CD8-positive, alpha-beta memory T cell (primary cell): ENCODE measurements at regions of chr3 and their contacts with region 1.

Region 1: DNA sequence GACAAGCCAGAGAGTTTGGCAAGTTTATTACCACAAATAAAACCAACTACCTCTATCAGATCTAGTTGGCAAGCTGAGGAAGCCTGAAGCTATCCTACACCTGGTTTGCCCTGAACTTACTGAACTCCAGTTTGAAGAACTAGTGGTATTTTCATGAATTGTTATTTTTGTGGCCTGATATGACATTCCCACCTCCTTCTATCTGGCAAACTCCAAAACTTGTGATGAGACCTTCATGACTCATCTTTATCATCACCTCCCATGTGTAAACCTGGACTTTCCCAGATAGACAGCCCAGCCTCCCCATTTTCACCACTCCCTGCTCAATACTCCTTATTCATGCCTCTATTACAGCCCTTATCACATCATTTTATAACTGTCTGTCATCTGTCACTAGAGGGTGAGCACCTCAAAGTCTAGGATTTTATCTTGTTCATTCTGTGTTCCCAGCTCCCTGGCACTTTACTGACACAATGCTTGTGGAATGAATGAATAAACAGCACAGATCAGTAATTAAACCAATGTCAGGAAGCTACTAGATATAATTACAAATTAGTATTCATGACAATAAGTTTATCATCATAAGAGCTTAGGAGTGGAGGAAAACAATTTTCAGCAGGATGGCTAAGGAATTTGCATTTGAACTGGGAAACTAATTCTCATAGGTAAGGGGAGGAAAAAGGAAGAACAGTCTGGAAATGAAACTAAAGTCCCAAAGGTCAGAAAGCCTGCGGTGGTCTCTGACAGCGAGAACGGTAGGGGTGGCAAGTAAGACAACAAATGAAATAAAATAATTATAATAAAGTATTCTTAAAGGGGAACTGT is 13.2 kb upstream of the TRANK1 start:
- DNase-seq: no peak
- H3K4me3 ChIP-seq: no peak overlapping the region
- H3K4me3 Mint-ChIP-seq: peak overlapping the region in 3 of 7 donors; percentile 23 to 70 (median 35)
- H3K27ac ChIP-seq: peak overlapping the region; percentile 68
- H3K27ac Mint-ChIP-seq: peak overlapping the region; percentile 26 to 75 (median 55)
- H3K4me1 ChIP-seq: no peaks in the 10 kb centered on the region
- H3K4me1 Mint-ChIP-seq: peaks cover 8 to 16% (median 11%) of the 10 kb centered on the region in 3 donors
- H3K27me3 ChIP-seq: no peaks in the 10 kb centered on the region
- H3K27me3 Mint-ChIP-seq: no peaks in the 10 kb centered on the region

Region 2: GRCh38 chr3:36312351-36312750 is 645.7 kb before region 1 on chr3:
- CTCF ChIA-PET with region 1: no interaction called
- POLR2A ChIA-PET with region 1: no interaction called
- DNase-seq: no peak
- H3K4me3 ChIP-seq: no peak overlapping the region
- H3K4me3 Mint-ChIP-seq: no peak overlapping the region
- H3K27ac ChIP-seq: no peak overlapping the region
- H3K27ac Mint-ChIP-seq: no peak overlapping the region
- H3K4me1 ChIP-seq: no peaks in the 10 kb centered on the region
- H3K4me1 Mint-ChIP-seq: no peaks in the 10 kb centered on the region
- H3K27me3 ChIP-seq: no peaks in the 10 kb centered on the region
- H3K27me3 Mint-ChIP-seq: no peaks in the 10 kb centered on the region

Region 3: GRCh38 chr3:36876181-36876936 is 81.7 kb before region 1 on chr3:
- CTCF ChIA-PET with region 1: interaction called, 10 read pairs
- POLR2A ChIA-PET with region 1: interaction called, 5 read pairs
- DNase-seq: peak in 4 of 5 donors; percentile 23 to 77 (median 58)
- H3K4me3 ChIP-seq: peak overlapping the region; percentile 49
- H3K4me3 Mint-ChIP-seq: peak overlapping the region; percentile 28 to 80 (median 74)
- H3K27ac ChIP-seq: peak overlapping the region; percentile 54
- H3K27ac Mint-ChIP-seq: peak overlapping the region; percentile 90 to 99 (median 94)
- H3K4me1 ChIP-seq: peaks cover 43% of the 10 kb centered on the region
- H3K4me1 Mint-ChIP-seq: peaks cover 58 to 83% (median 77%) of the 10 kb centered on the region in 3 donors
- H3K27me3 ChIP-seq: no peaks in the 10 kb centered on the region
- H3K27me3 Mint-ChIP-seq: no peaks in the 10 kb centered on the region

Region 4: GRCh38 chr3:36904641-36905040 is 53.4 kb before region 1 on chr3:
- CTCF ChIA-PET with region 1: interaction called, 22 read pairs
- POLR2A ChIA-PET with region 1: interaction called, 3 read pairs
- DNase-seq: no peak
- H3K4me3 ChIP-seq: no peak overlapping the region
- H3K4me3 Mint-ChIP-seq: peak overlapping the region; percentile 27 to 93 (median 60)
- H3K27ac ChIP-seq: no peak overlapping the region
- H3K27ac Mint-ChIP-seq: peak overlapping the region; percentile 61 to 91 (median 78)
- H3K4me1 ChIP-seq: peaks cover 77% of the 10 kb centered on the region
- H3K4me1 Mint-ChIP-seq: peaks cover 78 to 91% (median 91%) of the 10 kb centered on the region in 3 donors
- H3K27me3 ChIP-seq: no peaks in the 10 kb centered on the region
- H3K27me3 Mint-ChIP-seq: peaks cover 0 to 2% of the 10 kb centered on the region in 2 donors

Region 5: GRCh38 chr3:36923523-36923943 is 34.5 kb before region 1 on chr3:
- CTCF ChIA-PET with region 1: interaction called, 18 read pairs
- POLR2A ChIA-PET with region 1: no interaction called
- DNase-seq: peak in 1 of 5 donors; percentile 12
- H3K4me3 ChIP-seq: no peak overlapping the region
- H3K4me3 Mint-ChIP-seq: peak overlapping the region in 1 of 7 donors; percentile 13
- H3K27ac ChIP-seq: peak overlapping the region; percentile 86
- H3K27ac Mint-ChIP-seq: peak overlapping the region in 2 of 8 donors; percentile 36 to 73
- H3K4me1 ChIP-seq: no peaks in the 10 kb centered on the region
- H3K4me1 Mint-ChIP-seq: peaks cover 4 to 20% (median 19%) of the 10 kb centered on the region in 3 donors
- H3K27me3 ChIP-seq: no peaks in the 10 kb centered on the region
- H3K27me3 Mint-ChIP-seq: peaks cover 0 to 2% of the 10 kb centered on the region in 2 donors

Region 6: DNA sequence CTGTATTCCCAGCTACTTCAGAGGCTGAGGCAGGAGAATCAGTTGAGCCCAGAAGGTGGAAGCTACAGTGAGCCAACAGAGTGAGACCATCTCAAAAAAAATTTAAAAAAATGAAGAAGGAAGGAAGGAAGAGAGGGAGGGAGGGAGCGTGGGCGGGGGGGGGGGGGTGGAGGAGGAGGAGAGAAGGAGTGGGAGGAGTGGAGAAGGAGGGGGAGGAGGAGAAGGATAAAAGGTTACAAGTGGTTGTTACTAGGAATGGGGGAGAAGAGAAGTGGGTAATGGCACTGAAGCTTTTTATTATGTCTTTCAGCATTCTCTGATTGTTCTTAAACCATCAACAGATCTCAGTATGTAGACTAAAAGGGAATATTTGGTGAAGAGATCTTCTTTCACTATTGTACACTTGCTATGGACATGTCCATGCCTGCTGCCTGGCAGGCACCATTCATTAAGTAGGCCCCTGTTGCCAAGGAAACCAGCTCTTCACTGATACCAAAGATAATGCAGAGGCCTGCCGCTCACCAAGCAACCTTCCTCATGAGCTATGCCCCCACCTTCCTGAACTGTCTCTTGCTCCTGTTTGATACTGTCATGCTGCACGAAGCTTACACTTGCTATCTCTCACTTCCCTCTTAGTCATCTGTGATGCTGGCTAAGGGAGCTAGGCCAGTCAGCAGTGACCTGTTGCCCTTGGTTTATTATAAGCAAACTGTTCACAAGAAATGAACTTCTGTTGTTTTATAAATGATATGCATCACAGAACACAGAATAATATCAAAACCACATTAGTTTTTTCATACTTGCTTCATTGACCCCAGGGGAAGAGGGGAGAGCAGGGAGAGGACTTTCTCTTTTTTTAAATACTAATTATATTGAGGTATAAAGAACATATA is 11.7 kb after region 1 on chr3:
- CTCF ChIA-PET with region 1: interaction called, 11 read pairs
- POLR2A ChIA-PET with region 1: interaction called, 4 read pairs
- DNase-seq: peak in 3 of 5 donors; percentile 16 to 55 (median 33)
- H3K4me3 ChIP-seq: no peak overlapping the region
- H3K4me3 Mint-ChIP-seq: no peak overlapping the region
- H3K27ac ChIP-seq: peak overlapping the region; percentile 62
- H3K27ac Mint-ChIP-seq: peak overlapping the region; percentile 29 to 93 (median 54)
- H3K4me1 ChIP-seq: peaks cover 6% of the 10 kb centered on the region
- H3K4me1 Mint-ChIP-seq: peaks cover 14 to 24% (median 22%) of the 10 kb centered on the region in 3 donors
- H3K27me3 ChIP-seq: no peaks in the 10 kb centered on the region
- H3K27me3 Mint-ChIP-seq: no peaks in the 10 kb centered on the region

Region 7: DNA sequence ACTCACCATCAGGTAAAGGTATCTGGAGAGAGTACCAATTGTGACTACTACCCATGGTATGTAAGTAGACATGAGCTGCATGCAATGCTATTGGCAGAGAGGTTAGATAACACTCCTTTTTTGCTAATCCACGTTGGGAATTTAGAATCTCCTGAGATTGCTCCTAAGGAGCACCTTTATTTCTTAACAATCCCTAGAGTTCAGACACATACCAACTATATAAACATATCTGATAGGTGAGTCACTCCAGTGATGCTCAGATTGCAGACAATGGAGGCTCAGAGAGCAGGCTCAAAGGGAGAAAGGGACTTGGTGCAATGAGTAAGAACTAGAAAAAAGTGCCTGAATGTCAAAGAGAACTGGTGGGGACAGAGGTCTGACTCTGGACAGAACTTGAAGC is 263.3 kb after region 1 on chr3:
- CTCF ChIA-PET with region 1: interaction called, 3 read pairs
- POLR2A ChIA-PET with region 1: interaction called, 10 read pairs
- DNase-seq: no peak
- H3K4me3 ChIP-seq: no peak overlapping the region
- H3K4me3 Mint-ChIP-seq: no peak overlapping the region
- H3K27ac ChIP-seq: no peak overlapping the region
- H3K27ac Mint-ChIP-seq: peak overlapping the region in 3 of 8 donors; percentile 30 to 93 (median 38)
- H3K4me1 ChIP-seq: peaks cover 56% of the 10 kb centered on the region
- H3K4me1 Mint-ChIP-seq: peaks cover 58 to 73% (median 65%) of the 10 kb centered on the region in 3 donors
- H3K27me3 ChIP-seq: no peaks in the 10 kb centered on the region
- H3K27me3 Mint-ChIP-seq: peaks cover 0 to 1% of the 10 kb centered on the region in 2 donors